GM12878 (cell line): ENCODE measurements at regions of chr1 and their contacts with region 1.

Region 1: GRCh38 chr1:169914531-169914930 is 20.8 kb upstream of the SCYL3 start:
- DNase-seq: no peak
- ATAC-seq: no peak
- H3K4me3 ChIP-seq: peak overlapping the region; percentile 61
- H3K27ac ChIP-seq: peak overlapping the region; percentile 78
- H3K4me1 ChIP-seq: peaks cover 55% of the 10 kb centered on the region
- H3K27me3 ChIP-seq: no peaks in the 10 kb centered on the region
- CTCF ChIP-seq: no peak
- EP300 ChIP-seq: no peak
- POLR2A ChIP-seq: no peak
- RAD21 ChIP-seq: no peak

Region 2: GRCh38 chr1:169779980-169780379 is 134.6 kb before region 1 on chr1:
- CTCF ChIA-PET with region 1: no interaction called
- POLR2A ChIA-PET with region 1: no interaction called
- RAD21 ChIA-PET with region 1: no interaction called
- SMC1A ChIA-PET with region 1: no interaction called
- in situ Hi-C with region 1: no loop called
- intact Hi-C with region 1: no loop called
- DNase-seq: no peak
- ATAC-seq: no peak
- H3K4me3 ChIP-seq: no peak overlapping the region
- H3K27ac ChIP-seq: no peak overlapping the region
- H3K4me1 ChIP-seq: no peaks in the 10 kb centered on the region
- H3K27me3 ChIP-seq: no peaks in the 10 kb centered on the region
- CTCF ChIP-seq: no peak
- EP300 ChIP-seq: no peak
- POLR2A ChIP-seq: no peak
- RAD21 ChIP-seq: no peak

Region 3: GRCh38 chr1:169809370-169810095 is 105.0 kb before region 1 on chr1:
- CTCF ChIA-PET with region 1: no interaction called
- POLR2A ChIA-PET with region 1: no interaction called
- RAD21 ChIA-PET with region 1: no interaction called
- SMC1A ChIA-PET with region 1: no interaction called
- in situ Hi-C with region 1: no loop called
- intact Hi-C with region 1: no loop called
- DNase-seq: no peak
- ATAC-seq: peak; percentile 77
- H3K4me3 ChIP-seq: no peak overlapping the region
- H3K27ac ChIP-seq: no peak overlapping the region
- H3K4me1 ChIP-seq: no peaks in the 10 kb centered on the region
- H3K27me3 ChIP-seq: no peaks in the 10 kb centered on the region
- CTCF ChIP-seq: peak; percentile 25 to 54 (median 51); a peak in 5 of 6 replicates
- EP300 ChIP-seq: no peak
- POLR2A ChIP-seq: no peak
- RAD21 ChIP-seq: peak; percentile 64

Region 4: GRCh38 chr1:169928438-169929209 is 14.1 kb after region 1 on chr1:
- CTCF ChIA-PET with region 1: interaction called, 26 read pairs
- POLR2A ChIA-PET with region 1: no interaction called
- RAD21 ChIA-PET with region 1: interaction called, 17 read pairs
- SMC1A ChIA-PET with region 1: interaction called, 51 read pairs
- in situ Hi-C with region 1: no loop called
- intact Hi-C with region 1: no loop called
- DNase-seq: no peak
- ATAC-seq: peak; percentile 82
- H3K4me3 ChIP-seq: no peak overlapping the region
- H3K27ac ChIP-seq: no peak overlapping the region
- H3K4me1 ChIP-seq: peaks cover 6% of the 10 kb centered on the region
- H3K27me3 ChIP-seq: no peaks in the 10 kb centered on the region
- CTCF ChIP-seq: peak; percentile 53 to 73 (median 70)
- EP300 ChIP-seq: no peak
- POLR2A ChIP-seq: no peak
- RAD21 ChIP-seq: peak; percentile 88